ENCODE measurements at regions of chr13 and their contacts with region 1.

Region 1: GRCh38 chr13:45718063-45718462 is 15.9 kb downstream of the CBY2 start:
- DNase-seq: peak; percentile 10
- H3K4me3 Mint-ChIP-seq: no peak overlapping the region
- H3K27ac Mint-ChIP-seq: no peak overlapping the region
- H3K4me1 Mint-ChIP-seq: no peaks in the 10 kb centered on the region
- H3K27me3 Mint-ChIP-seq: no peaks in the 10 kb centered on the region

Region 2: DNA sequence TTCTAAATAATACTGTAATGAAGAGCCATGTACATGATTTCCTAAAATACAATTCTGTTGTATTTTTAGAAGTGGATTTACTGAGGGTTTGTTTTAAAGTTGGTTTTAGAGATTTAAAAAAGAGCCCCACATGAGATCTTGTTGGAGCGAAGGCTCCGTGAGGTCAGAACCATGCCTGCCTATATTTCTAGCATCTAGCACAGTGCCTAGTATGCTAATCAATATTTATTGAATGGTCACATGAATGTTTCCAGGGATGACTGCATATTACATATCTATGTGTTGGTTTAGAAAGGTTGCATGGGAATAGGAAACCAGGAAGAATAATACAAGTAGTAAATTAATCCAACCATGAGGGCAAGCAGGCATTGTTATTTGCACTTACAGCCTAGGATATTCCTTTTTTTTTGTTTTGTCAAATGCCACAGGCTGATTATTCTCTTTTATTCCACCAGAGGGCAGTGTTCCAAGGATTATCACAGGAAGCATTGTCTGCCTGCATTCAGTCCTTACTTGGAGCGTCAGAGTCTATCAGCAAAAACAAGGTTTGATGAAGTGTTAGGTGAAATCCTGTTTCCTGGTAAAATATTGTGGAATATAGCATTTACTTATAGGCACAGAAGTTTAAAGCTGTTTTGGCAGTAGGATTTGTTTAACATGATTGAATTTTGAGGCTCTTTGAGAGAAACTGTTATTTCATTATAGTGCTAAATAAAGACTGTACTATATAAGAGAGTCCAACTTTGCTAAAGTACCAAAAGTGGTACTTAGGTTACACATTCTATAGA is 206.6 kb before region 1 on chr13:
- CTCF ChIA-PET with region 1: no interaction called
- intact Hi-C with region 1: loop called (anchors 1 kb)
- DNase-seq: peak; percentile 30
- H3K4me3 Mint-ChIP-seq: no peak overlapping the region
- H3K27ac Mint-ChIP-seq: no peak overlapping the region
- H3K4me1 Mint-ChIP-seq: peaks cover 8% of the 10 kb centered on the region
- H3K27me3 Mint-ChIP-seq: no peaks in the 10 kb centered on the region

Region 3: GRCh38 chr13:45554604-45555109 is 163.4 kb before region 1 on chr13:
- CTCF ChIA-PET with region 1: no interaction called
- intact Hi-C with region 1: no loop called
- DNase-seq: no peak
- H3K4me3 Mint-ChIP-seq: no peak overlapping the region
- H3K27ac Mint-ChIP-seq: no peak overlapping the region
- H3K4me1 Mint-ChIP-seq: no peaks in the 10 kb centered on the region
- H3K27me3 Mint-ChIP-seq: no peaks in the 10 kb centered on the region

Region 4: GRCh38 chr13:45744979-45745378 is 26.9 kb after region 1 on chr13:
- CTCF ChIA-PET with region 1: no interaction called
- intact Hi-C with region 1: no loop called
- DNase-seq: no peak
- H3K4me3 Mint-ChIP-seq: no peak overlapping the region
- H3K27ac Mint-ChIP-seq: no peak overlapping the region
- H3K4me1 Mint-ChIP-seq: no peaks in the 10 kb centered on the region
- H3K27me3 Mint-ChIP-seq: no peaks in the 10 kb centered on the region